ENCODE measurements at regions of chr3 and their contacts with region 1.

Region 1: GRCh38 chr3:57841818-57842217 is 85.7 kb downstream of the SLMAP start:
- DNase-seq: no peak
- ATAC-seq: no peak
- H3K4me3 ChIP-seq: no peak overlapping the region
- H3K27ac ChIP-seq: no peak overlapping the region
- H3K4me1 ChIP-seq: no peaks in the 10 kb centered on the region
- H3K27me3 ChIP-seq: no peaks in the 10 kb centered on the region
- CTCF ChIP-seq: no peak

Region 2: GRCh38 chr3:57164657-57165573 is 676.9 kb before region 1 on chr3 and contains the start of gene IL17RD:
- CTCF ChIA-PET with region 1: interaction called, 11 read pairs
- POLR2A ChIA-PET with region 1: no interaction called
- in situ Hi-C with region 1: no loop called
- intact Hi-C with region 1: no loop called
- DNase-seq: no peak
- ATAC-seq: peak; percentile 89
- H3K4me3 ChIP-seq: peak within 1 kb of the TSS; percentile 56 to 60
- H3K27ac ChIP-seq: no peak within 1 kb of the TSS
- H3K4me1 ChIP-seq: no peaks in the 10 kb centered on the region; the same call in 1 of the 2 replicates
- H3K27me3 ChIP-seq: no peaks in the 10 kb centered on the region
- CTCF ChIP-seq: no peak
- total RNA-seq, gene IL17RD: 3.5 TPM

Region 3: DNA sequence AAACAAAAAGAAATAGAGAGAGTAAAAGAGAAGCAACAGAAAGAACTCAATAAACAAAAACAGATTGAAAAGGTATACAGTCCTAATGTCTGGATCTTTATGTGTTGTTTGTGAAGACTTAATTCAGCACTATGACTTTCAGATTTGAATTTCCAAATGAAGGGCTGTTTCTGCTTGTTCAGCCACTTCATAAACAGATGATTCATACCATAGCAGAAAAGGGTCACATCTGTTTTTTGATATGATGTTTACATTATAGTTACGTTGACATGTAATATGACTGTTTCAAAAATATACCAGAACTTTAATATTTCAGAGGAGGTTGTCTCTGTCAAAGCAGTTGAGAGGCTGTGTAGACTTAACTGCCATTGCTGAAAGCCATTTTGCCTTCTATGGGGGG is 573.4 kb before region 1 on chr3:
- CTCF ChIA-PET with region 1: no interaction called
- POLR2A ChIA-PET with region 1: no interaction called
- in situ Hi-C with region 1: no loop called
- intact Hi-C with region 1: no loop called
- DNase-seq: no peak
- ATAC-seq: no peak
- H3K4me3 ChIP-seq: no peak overlapping the region
- H3K27ac ChIP-seq: no peak overlapping the region
- H3K4me1 ChIP-seq: no peaks in the 10 kb centered on the region
- H3K27me3 ChIP-seq: no peaks in the 10 kb centered on the region
- CTCF ChIP-seq: no peak

Region 4: DNA sequence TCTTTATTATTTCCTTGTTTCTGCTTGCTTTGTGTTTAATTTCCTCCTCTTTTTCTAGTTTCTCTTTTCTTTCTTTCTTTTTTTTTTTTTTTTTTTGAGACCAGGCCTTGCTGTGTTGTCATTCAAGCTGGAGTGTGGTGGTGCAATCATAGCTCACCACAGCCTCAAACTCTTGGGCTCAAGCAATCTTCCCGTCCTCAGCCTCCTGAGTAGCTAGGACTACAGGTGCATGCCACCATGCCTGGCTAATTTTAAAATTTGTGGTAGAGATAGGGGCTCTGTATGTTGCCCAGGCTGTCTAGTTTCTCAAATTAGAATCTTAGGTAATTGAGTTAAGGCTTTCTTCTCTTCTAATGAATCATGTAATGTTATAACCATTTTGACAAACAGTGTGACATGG is 63.3 kb before region 1 on chr3:
- CTCF ChIA-PET with region 1: no interaction called
- POLR2A ChIA-PET with region 1: interaction called, 18 read pairs
- in situ Hi-C with region 1: no loop called
- intact Hi-C with region 1: no loop called
- DNase-seq: no peak
- ATAC-seq: no peak
- H3K4me3 ChIP-seq: no peak overlapping the region
- H3K27ac ChIP-seq: no peak overlapping the region
- H3K4me1 ChIP-seq: no peaks in the 10 kb centered on the region
- H3K27me3 ChIP-seq: no peaks in the 10 kb centered on the region
- CTCF ChIP-seq: no peak

Region 5: DNA sequence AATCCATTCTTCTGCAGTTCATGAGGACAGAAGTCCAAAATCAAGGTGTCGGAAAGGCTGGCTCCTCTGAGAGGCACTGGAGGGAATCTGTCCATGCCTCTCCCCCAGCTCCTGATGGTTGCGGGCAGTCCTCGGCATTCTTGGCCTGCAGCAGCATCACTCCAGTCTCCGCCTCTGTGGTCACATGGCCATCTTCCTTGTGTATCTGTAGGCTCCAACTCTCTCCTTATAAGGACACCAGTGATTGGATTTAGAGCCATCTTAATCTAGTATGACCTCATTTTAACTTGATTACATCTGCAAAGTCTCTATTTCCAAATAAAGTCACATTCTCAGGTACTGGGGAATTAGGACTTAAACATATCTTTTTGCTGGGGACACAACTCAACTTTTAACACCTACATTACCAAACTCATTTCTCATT is 110.4 kb after region 1 on chr3:
- CTCF ChIA-PET with region 1: no interaction called
- POLR2A ChIA-PET with region 1: no interaction called
- in situ Hi-C with region 1: no loop called
- intact Hi-C with region 1: no loop called
- DNase-seq: no peak
- ATAC-seq: peak; percentile 39; the same call in 1 of the 2 replicates
- H3K4me3 ChIP-seq: no peak overlapping the region
- H3K27ac ChIP-seq: peak overlapping the region; percentile 70
- H3K4me1 ChIP-seq: peaks cover 18% of the 10 kb centered on the region
- H3K27me3 ChIP-seq: no peaks in the 10 kb centered on the region
- CTCF ChIP-seq: no peak